Activated T-helper 2 cell treated with anti-CD3 and anti-CD28 coated beads, Interferon-gamma antibody, Interleukin-2, Interleukin-4, amounts not matched to agents 10 μg/mL and 5 μg/mL and 100 μg/mL, durations not matched to agents 14 hours and 24 hours and 36 hours (primary cell): ENCODE measurements at regions of chr19 and their contacts with region 1.

Region 1: GRCh38 chr19:35740423-35741202 is 1.6 kb downstream of the IGFLR1 start:
- DNase-seq: peak; percentile 95
- H3K4me3 Mint-ChIP-seq: peak overlapping the region; percentile 94
- H3K27ac Mint-ChIP-seq: peak overlapping the region; percentile 94
- H3K4me1 Mint-ChIP-seq: peaks cover 25% of the 10 kb centered on the region
- H3K27me3 Mint-ChIP-seq: no peaks in the 10 kb centered on the region

Region 2: GRCh38 chr19:35648017-35648961 is 92.3 kb before region 1 on chr19 and contains the start of gene COX6B1:
- intact Hi-C with region 1: loop called (anchors 5 kb)
- DNase-seq: peak; percentile 93
- H3K4me3 Mint-ChIP-seq: peak within 1 kb of the TSS; percentile 96
- H3K27ac Mint-ChIP-seq: peak within 1 kb of the TSS; percentile 71
- H3K4me1 Mint-ChIP-seq: peaks cover 17% of the 10 kb centered on the region
- H3K27me3 Mint-ChIP-seq: no peaks in the 10 kb centered on the region
- total RNA-seq, gene COX6B1: 431 and 461 TPM in 2 replicates

Region 3: DNA sequence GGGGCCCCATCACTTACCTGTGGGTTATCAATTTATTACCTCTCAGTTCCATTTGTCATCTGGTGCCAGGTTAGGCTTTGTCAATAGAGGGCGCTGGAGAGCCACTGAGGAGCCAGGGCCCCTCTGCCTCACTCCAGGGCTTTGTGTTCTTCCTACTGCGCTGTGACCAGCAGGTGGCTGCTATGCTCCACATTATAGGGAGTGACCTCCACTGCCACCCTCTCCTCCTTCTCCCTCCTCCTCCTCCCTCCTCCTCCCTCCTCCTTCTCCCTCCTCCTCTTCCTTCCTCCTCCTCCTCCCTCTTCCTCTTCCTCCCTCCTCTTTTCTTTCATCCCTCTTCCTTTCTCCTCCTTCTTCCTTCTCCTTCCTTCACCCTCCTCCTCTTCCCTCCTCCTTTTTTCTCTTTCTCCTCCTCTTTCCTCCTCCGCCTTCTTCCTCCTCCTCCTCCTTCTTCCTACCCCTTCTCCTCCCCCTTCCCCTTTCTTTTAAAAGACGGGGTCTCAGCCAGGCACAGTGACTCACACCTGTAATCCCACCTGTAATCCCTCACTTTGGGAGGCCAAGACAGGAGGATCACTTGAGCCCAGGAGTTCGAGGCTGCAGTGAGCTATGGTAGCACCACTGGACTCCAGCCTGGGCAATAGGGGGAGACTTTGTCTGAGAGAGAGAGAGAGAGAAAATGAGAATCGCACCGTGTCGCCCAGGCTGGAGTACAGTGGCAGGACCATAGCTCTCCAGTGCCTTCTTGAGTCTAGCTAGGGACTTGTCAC is 46.6 kb before region 1 on chr19:
- intact Hi-C with region 1: loop called (anchors 2 kb)
- DNase-seq: peak; percentile 85
- H3K4me3 Mint-ChIP-seq: no peak overlapping the region
- H3K27ac Mint-ChIP-seq: peak overlapping the region; percentile 35
- H3K4me1 Mint-ChIP-seq: peaks cover 13% of the 10 kb centered on the region
- H3K27me3 Mint-ChIP-seq: no peaks in the 10 kb centered on the region

Region 4: GRCh38 chr19:35710784-35711723 is 29.6 kb before region 1 on chr19:
- intact Hi-C with region 1: loop called (anchors 1 kb)
- DNase-seq: peak; percentile 71
- H3K4me3 Mint-ChIP-seq: peak overlapping the region; percentile 66
- H3K27ac Mint-ChIP-seq: peak overlapping the region; percentile 100
- H3K4me1 Mint-ChIP-seq: peaks cover 40% of the 10 kb centered on the region
- H3K27me3 Mint-ChIP-seq: no peaks in the 10 kb centered on the region

Region 5: DNA sequence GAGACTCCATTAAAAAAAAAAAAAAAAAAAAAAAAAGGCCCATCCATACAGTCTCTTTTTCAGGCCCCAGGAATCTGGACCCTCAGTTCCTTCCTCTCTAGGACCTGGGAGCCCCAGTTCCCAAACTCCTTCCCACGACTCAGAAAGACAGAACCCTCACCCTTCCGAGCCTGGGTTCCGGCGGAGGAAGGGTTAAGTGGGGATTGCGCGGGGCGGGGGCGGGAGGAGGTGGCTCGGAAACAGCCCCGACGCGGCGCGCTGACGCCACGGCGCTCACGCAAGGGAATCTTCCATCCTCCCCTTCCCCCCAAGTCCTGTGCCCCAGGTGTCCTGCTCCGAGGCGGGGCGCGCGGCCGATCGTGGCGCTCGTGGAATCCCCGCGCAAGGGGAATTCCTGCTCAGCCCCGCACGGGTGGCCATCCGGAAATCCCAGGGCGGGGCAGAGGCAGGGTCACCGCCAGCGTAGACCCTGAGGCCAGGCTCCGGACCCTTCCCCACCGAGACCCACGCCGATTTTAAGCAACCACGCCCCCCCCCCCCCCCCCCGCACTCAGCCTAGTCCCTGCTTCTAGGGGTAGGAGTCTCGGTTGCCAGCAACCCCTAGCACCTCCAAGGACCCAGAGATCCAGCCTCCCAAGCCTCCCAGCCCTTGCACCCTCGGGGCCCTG is 159.1 kb after region 1 on chr19:
- intact Hi-C with region 1: loop called (anchors 1 kb)
- DNase-seq: peak; percentile 82
- H3K4me3 Mint-ChIP-seq: peak overlapping the region; percentile 92
- H3K27ac Mint-ChIP-seq: peak overlapping the region; percentile 96
- H3K4me1 Mint-ChIP-seq: peaks cover 43% of the 10 kb centered on the region
- H3K27me3 Mint-ChIP-seq: no peaks in the 10 kb centered on the region

Region 6: GRCh38 chr19:35995048-35995993 is 254.7 kb after region 1 on chr19 and contains the start of gene SDHAF1:
- intact Hi-C with region 1: loop called (anchors 10 kb)
- DNase-seq: peak; percentile 91
- H3K4me3 Mint-ChIP-seq: peak within 1 kb of the TSS; percentile 93
- H3K27ac Mint-ChIP-seq: peak within 1 kb of the TSS; percentile 89
- H3K4me1 Mint-ChIP-seq: peaks cover 20% of the 10 kb centered on the region
- H3K27me3 Mint-ChIP-seq: no peaks in the 10 kb centered on the region
- total RNA-seq, gene SDHAF1: 20.0 and 20.8 TPM in 2 replicates

Region 7: GRCh38 chr19:36054119-36054732 is 313.6 kb after region 1 on chr19 and contains the start of gene THAP8:
- intact Hi-C with region 1: loop called (anchors 10 kb)
- DNase-seq: peak; percentile 100
- H3K4me3 Mint-ChIP-seq: peak within 1 kb of the TSS; percentile 98
- H3K27ac Mint-ChIP-seq: peak within 1 kb of the TSS; percentile 96
- H3K4me1 Mint-ChIP-seq: peaks cover 20% of the 10 kb centered on the region
- H3K27me3 Mint-ChIP-seq: no peaks in the 10 kb centered on the region
- total RNA-seq, gene THAP8: 1.8 and 2.2 TPM in 2 replicates